T-cell (primary cell): ENCODE measurements at regions of chr10 and their contacts with region 1.

Region 1: DNA sequence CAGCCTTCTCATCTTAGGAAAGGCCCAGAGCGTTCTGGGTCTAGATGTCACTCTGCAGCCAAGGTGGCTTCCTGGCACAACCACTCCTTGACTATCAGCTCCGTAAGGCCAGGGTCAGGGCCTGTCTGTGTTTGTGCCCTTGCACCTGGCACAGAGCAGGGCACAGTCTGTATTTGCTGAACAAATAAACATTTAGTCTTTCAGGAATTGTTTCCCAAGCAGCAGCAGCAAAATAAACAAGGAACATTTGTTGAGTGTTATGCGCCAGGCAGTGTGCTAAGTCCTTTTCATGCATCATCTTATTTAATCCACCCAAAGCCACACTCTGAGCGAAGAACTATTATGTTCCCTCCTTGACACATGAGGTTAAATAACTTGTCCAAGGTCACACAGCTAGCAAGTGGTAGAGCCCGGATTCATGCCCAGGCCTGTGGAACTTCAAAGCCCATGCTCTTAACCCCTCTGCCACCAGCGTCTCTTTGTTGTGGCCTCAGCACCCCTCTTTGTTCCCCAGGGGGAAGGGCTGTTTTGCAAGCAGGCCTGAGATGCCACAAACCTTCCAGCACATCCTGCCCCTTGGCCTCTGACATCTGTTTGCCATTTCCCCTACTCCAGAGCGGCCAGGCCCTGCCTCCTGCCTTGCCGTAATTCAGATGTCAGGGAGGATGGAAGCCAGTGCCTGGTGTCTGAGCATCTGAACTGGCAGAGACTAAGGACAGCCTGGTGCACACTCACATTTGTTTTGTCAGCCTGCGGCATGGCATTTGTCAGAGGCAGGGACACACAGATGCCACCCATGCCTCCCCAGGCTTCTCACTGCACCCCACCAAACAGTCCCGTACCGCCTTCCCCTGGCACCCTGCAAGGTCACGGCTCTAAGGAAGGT is 325.8 kb upstream of the ZMIZ1 start:
- DNase-seq: peak in 11 of 35 experiments; percentile 3 to 29 (median 15)
- ATAC-seq: peak; percentile 43 to 64 (median 60)
- H3K4me3 ChIP-seq: no peak overlapping the region
- H3K4me3 Mint-ChIP-seq: peak overlapping the region in 1 of 3 donors; percentile 34
- H3K27ac ChIP-seq: no peak overlapping the region
- H3K27ac Mint-ChIP-seq: no peak overlapping the region
- H3K4me1 ChIP-seq: peaks cover 10 to 13% of the 10 kb centered on the region in 2 experiments
- H3K4me1 Mint-ChIP-seq: peaks cover 15 to 23% (median 16%) of the 10 kb centered on the region in 3 donors
- H3K27me3 ChIP-seq: peaks cover 0 to 12% of the 10 kb centered on the region in 2 experiments
- H3K27me3 Mint-ChIP-seq: peaks cover 0 to 3% of the 10 kb centered on the region in 2 donors

Region 2: GRCh38 chr10:77531441-77532001 is 1211.5 kb before region 1 on chr10:
- CTCF ChIA-PET with region 1: no interaction called
- POLR2A ChIA-PET with region 1: no interaction called
- DNase-seq: no peak
- ATAC-seq: no peak
- H3K4me3 ChIP-seq: no peak overlapping the region
- H3K4me3 Mint-ChIP-seq: no peak overlapping the region
- H3K27ac ChIP-seq: no peak overlapping the region
- H3K27ac Mint-ChIP-seq: no peak overlapping the region
- H3K4me1 ChIP-seq: no peaks in the 10 kb centered on the region
- H3K4me1 Mint-ChIP-seq: no peaks in the 10 kb centered on the region
- H3K27me3 ChIP-seq: peaks cover 0 to 9% of the 10 kb centered on the region in 2 experiments
- H3K27me3 Mint-ChIP-seq: peaks cover 5 to 13% of the 10 kb centered on the region in 2 donors

Region 3: GRCh38 chr10:78263521-78263988 is 479.4 kb before region 1 on chr10:
- CTCF ChIA-PET with region 1: no interaction called
- POLR2A ChIA-PET with region 1: interaction called in 1 of 2 experiments, 12 read pairs
- DNase-seq: no peak
- ATAC-seq: no peak
- H3K4me3 ChIP-seq: no peak overlapping the region
- H3K4me3 Mint-ChIP-seq: no peak overlapping the region
- H3K27ac ChIP-seq: no peak overlapping the region
- H3K27ac Mint-ChIP-seq: no peak overlapping the region
- H3K4me1 ChIP-seq: no peaks in the 10 kb centered on the region
- H3K4me1 Mint-ChIP-seq: no peaks in the 10 kb centered on the region
- H3K27me3 ChIP-seq: peaks cover 0 to 3% of the 10 kb centered on the region in 2 experiments
- H3K27me3 Mint-ChIP-seq: peaks cover 0 to 3% of the 10 kb centered on the region in 2 donors

Region 4: DNA sequence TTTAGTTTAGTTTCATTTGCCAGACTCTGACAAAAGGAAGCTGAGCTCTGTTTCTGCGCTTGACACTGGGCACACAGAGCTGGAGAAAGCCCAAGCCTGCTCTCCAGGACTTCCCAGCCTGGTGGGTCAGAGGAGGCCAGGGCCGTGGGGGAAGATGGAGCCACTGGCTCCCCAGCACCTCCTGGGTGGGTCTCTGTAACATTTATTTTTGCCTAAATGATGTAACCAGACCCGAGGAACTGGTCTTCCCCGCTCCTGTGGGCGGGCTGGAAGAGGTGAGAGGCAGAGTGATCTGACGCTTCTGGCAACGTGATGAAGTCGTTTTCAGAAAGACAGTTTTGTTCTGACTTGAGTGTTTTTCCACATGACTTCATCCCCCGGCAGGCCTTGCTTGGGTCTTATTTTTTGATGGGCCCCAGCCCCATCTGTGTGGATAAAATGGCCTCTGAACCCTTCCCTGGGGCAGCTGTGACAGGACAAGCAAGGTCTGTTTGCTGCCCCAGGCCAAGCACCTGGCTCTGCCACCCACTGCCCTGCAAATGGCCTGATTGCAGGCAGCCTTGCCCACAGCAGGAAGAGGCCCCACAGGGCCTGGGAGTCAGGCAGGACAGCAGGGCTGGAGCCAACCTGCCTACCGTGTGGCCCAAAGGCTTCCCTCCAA is 20.8 kb after region 1 on chr10:
- CTCF ChIA-PET with region 1: no interaction called
- POLR2A ChIA-PET with region 1: no interaction called
- DNase-seq: no peak
- ATAC-seq: no peak
- H3K4me3 ChIP-seq: no peak overlapping the region
- H3K4me3 Mint-ChIP-seq: no peak overlapping the region
- H3K27ac ChIP-seq: no peak overlapping the region
- H3K27ac Mint-ChIP-seq: no peak overlapping the region
- H3K4me1 ChIP-seq: no peaks in the 10 kb centered on the region
- H3K4me1 Mint-ChIP-seq: no peaks in the 10 kb centered on the region
- H3K27me3 ChIP-seq: peaks cover 0 to 4% of the 10 kb centered on the region in 2 experiments
- H3K27me3 Mint-ChIP-seq: no peaks in the 10 kb centered on the region